ENCODE measurements at regions of chr1 and their contacts with region 1.

Region 1: GRCh38 chr1:202315576-202316168 is 26.1 kb downstream of the UBE2T start:
- DNase-seq: peak; percentile 81
- H3K4me3 ChIP-seq: no peak overlapping the region
- H3K27ac ChIP-seq: no peak overlapping the region
- H3K4me1 ChIP-seq: no peaks in the 10 kb centered on the region
- H3K27me3 ChIP-seq: no peaks in the 10 kb centered on the region
- CTCF ChIP-seq: peak; percentile 67 to 95 (median 88)
- POLR2A ChIP-seq: no peak

Region 2: DNA sequence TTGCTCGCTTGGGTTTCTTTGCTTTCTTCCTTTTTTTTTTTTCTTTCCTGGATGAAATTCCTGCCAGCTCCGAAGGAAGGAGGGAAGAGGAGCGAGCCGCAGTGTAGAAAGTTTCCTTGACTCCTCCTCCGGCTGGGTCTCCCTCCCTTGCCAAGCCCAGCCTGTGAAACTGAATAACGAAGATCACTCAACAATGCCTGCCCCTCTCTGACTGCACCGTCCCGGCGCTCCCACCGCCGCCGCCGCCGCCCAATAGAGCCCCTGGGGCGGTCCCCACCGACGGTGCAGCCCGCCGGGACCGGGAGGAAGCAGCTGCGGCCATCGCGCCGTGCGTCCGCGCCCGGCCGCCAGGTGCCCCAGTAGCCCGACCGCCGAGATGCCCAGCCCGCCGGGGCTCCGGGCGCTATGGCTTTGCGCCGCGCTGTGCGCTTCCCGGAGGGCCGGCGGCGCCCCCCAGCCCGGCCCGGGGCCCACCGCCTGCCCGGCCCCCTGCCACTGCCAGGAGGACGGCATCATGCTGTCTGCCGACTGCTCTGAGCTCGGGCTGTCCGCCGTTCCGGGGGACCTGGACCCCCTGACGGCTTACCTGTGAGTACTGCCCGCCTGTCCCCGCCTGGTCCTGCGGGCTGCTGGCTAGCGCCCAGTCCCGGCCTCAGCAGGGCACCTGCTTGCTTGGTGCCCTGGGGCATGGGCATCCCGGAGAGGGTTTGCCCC is 121.9 kb before region 1 on chr1 and contains the start of gene LGR6:
- intact Hi-C with region 1: loop called (anchors 1 kb)
- DNase-seq: no peak
- H3K4me3 ChIP-seq: peak within 1 kb of the TSS; percentile 19 to 30
- H3K27ac ChIP-seq: no peak within 1 kb of the TSS
- H3K4me1 ChIP-seq: peaks cover 3% of the 10 kb centered on the region
- H3K27me3 ChIP-seq: peaks cover 5% of the 10 kb centered on the region
- CTCF ChIP-seq: peak in 2 of 4 experiments; percentile 50 to 64
- POLR2A ChIP-seq: no peak
- total RNA-seq, gene LGR6: 8.0 to 25.6 TPM